ENCODE measurements at regions of chr14 and their contacts with region 1.

Region 1: GRCh38 chr14:73728717-73729330 is 14.6 kb upstream of the PNMA1 start:
- DNase-seq: peak; percentile 93
- H3K4me3 Mint-ChIP-seq: no peak overlapping the region
- H3K27ac Mint-ChIP-seq: peak overlapping the region; percentile 68
- H3K4me1 Mint-ChIP-seq: peaks cover 39% of the 10 kb centered on the region
- H3K27me3 Mint-ChIP-seq: no peaks in the 10 kb centered on the region

Region 2: DNA sequence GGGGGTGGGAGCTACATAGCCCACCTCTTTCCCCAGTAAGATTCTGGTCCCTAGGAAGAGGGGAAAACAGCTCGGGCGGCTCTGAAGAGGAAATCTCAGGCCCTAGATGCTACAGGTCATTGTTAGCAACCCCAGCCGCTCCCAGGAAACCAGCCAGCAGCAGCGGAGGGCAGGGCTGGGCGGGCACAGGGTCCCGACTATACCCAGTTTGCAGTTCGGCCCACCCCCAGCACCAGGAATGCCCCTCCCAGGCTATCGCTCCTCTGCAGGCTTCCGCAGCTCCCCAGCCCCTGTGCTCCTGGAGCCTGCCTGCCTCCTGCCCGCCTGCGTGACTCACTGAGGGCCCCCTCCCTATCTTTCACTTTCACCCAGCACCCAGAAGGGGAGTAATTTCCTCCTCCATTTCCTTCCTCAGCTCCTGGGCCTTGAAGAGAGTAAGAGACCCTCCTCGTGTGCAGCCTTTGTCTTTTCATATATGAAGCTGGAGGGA is 12.6 kb after region 1 on chr14:
- CTCF ChIA-PET with region 1: interaction called, 115 read pairs
- DNase-seq: peak; percentile 87
- H3K4me3 Mint-ChIP-seq: peak overlapping the region; percentile 74
- H3K27ac Mint-ChIP-seq: peak overlapping the region; percentile 91
- H3K4me1 Mint-ChIP-seq: peaks cover 80% of the 10 kb centered on the region
- H3K27me3 Mint-ChIP-seq: no peaks in the 10 kb centered on the region

Region 3: GRCh38 chr14:73759714-73760597 is 31.1 kb after region 1 on chr14:
- CTCF ChIA-PET with region 1: interaction called, 88 read pairs
- DNase-seq: peak; percentile 97
- H3K4me3 Mint-ChIP-seq: peak overlapping the region; percentile 87
- H3K27ac Mint-ChIP-seq: peak overlapping the region; percentile 97
- H3K4me1 Mint-ChIP-seq: peaks cover 77% of the 10 kb centered on the region
- H3K27me3 Mint-ChIP-seq: no peaks in the 10 kb centered on the region

Region 4: DNA sequence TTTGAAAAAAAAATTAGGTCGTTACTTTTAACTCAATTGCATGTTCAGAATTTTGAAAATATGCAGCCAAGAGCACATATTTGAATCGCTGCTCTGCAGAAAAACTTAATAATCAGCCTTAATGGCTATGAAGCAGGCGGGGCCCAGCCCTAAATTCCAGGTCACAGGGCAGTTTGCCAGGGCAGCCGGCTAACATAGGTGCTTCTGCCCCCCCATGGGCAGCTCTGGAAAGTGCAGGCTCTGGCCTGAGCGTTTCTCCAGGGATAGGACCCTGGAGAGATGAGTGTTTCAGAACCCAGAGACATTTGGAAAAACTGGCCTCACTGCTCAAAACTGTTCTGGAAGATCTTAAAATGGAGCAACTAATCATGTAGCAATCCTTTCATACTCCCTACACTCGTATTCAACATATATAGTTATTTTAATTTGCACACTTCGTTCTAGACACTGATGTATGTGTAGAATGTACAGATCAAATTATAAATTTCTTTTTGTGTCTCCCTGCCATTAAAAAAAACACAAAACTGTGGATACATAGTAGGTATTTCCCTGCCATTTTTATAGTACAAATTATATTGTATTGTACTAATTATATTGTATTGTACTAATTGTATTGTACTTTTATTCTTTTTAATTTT is 96.8 kb after region 1 on chr14:
- CTCF ChIA-PET with region 1: interaction called, 155 read pairs
- DNase-seq: peak; percentile 85
- H3K4me3 Mint-ChIP-seq: no peak overlapping the region
- H3K27ac Mint-ChIP-seq: no peak overlapping the region
- H3K4me1 Mint-ChIP-seq: peaks cover 8% of the 10 kb centered on the region
- H3K27me3 Mint-ChIP-seq: peaks cover 18% of the 10 kb centered on the region